Activated T-helper 1 cell treated with anti-CD3 and anti-CD28 coated beads, Interleukin-12 subunit alpha, Interleukin-12 subunit beta, Interleukin-2, Interleukin-4 antibody, amounts not matched to agents 30 ng/mL and 10 ng/mL and 1 ng/mL, durations not matched to agents 14 hours and 24 hours and 36 hours (primary cell): ENCODE measurements at regions of chr7 and their contacts with region 1.

Region 1: DNA sequence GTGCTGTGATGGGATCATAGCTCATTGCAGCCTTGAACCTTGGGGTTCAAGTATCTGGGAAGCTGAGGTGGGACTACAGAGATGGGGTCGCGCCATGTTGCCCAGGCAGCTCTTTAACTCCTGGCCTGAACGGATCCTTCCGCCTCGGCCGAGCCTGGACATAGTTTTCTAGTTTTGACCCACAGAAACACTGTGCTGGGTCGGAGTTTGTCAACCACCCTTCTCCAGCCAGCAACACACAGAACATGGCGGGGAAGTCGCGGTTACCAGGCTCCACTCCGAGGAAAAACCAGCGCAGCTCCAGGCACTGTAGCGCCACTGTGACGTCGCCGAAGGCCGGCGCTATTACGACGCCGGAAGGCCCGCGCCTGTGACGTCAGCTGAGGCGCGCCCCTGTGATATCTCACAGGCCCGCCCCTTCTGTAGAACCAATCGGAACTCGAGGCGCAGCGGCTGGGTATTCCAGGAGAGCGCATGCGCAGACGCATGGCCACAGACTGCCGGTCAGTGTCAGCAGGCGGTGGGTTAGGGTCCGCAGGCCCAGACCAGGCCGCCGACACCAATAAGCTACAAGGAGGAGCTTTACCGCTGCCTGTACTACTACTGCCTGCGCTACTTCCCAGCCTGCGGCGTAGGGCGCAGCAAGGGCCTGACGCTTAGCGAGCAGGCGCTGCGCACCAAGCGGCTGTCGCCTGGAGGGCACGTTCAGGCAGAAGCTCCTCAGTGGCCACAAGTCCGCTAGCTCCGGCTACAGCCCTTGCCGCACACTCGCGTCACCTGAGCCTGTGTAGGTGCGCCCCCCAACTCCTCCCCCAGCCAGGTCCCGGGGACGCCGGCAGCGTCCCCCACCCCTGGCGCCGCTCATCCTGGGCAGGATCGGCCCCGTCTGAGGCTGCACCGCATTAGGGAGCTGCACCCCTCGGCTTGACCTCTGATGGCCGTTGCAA is 135.2 kb upstream of the KCTD7 start:
- DNase-seq: peak; percentile 96
- H3K4me3 Mint-ChIP-seq: peak overlapping the region; percentile 89
- H3K27ac Mint-ChIP-seq: peak overlapping the region; percentile 89
- H3K4me1 Mint-ChIP-seq: peaks cover 10% of the 10 kb centered on the region
- H3K27me3 Mint-ChIP-seq: no peaks in the 10 kb centered on the region

Region 2: GRCh38 chr7:65750511-65751344 is 742.8 kb before region 1 on chr7:
- intact Hi-C with region 1: loop called (anchors 10 kb)
- DNase-seq: peak; percentile 89
- H3K4me3 Mint-ChIP-seq: peak overlapping the region; percentile 100
- H3K27ac Mint-ChIP-seq: peak overlapping the region; percentile 97
- H3K4me1 Mint-ChIP-seq: peaks cover 11% of the 10 kb centered on the region
- H3K27me3 Mint-ChIP-seq: no peaks in the 10 kb centered on the region

Region 3: GRCh38 chr7:66075590-66076461 is 417.7 kb before region 1 on chr7 and contains the start of gene ASL:
- intact Hi-C with region 1: loop called (anchors 1 kb)
- DNase-seq: peak; percentile 93
- H3K4me3 Mint-ChIP-seq: peak within 1 kb of the TSS; percentile 95
- H3K27ac Mint-ChIP-seq: peak within 1 kb of the TSS; percentile 72
- H3K4me1 Mint-ChIP-seq: peaks cover 19% of the 10 kb centered on the region
- H3K27me3 Mint-ChIP-seq: peaks cover 3% of the 10 kb centered on the region
- total RNA-seq, gene ASL: 36.6 and 44.9 TPM in 2 replicates

Region 4: GRCh38 chr7:66321292-66321691 is 172.2 kb before region 1 on chr7:
- intact Hi-C with region 1: no loop called
- DNase-seq: no peak
- H3K4me3 Mint-ChIP-seq: no peak overlapping the region
- H3K27ac Mint-ChIP-seq: no peak overlapping the region
- H3K4me1 Mint-ChIP-seq: no peaks in the 10 kb centered on the region
- H3K27me3 Mint-ChIP-seq: peaks cover 2% of the 10 kb centered on the region

Region 5: GRCh38 chr7:66454600-66455225 is 38.8 kb before region 1 on chr7:
- intact Hi-C with region 1: loop called (anchors 1 kb)
- DNase-seq: no peak
- H3K4me3 Mint-ChIP-seq: no peak overlapping the region
- H3K27ac Mint-ChIP-seq: peak overlapping the region; percentile 74
- H3K4me1 Mint-ChIP-seq: peaks cover 25% of the 10 kb centered on the region
- H3K27me3 Mint-ChIP-seq: no peaks in the 10 kb centered on the region

Region 6: GRCh38 chr7:66529883-66530610 is 36.5 kb after region 1 on chr7:
- intact Hi-C with region 1: no loop called
- DNase-seq: no peak
- H3K4me3 Mint-ChIP-seq: no peak overlapping the region
- H3K27ac Mint-ChIP-seq: no peak overlapping the region
- H3K4me1 Mint-ChIP-seq: no peaks in the 10 kb centered on the region
- H3K27me3 Mint-ChIP-seq: no peaks in the 10 kb centered on the region

Region 7: DNA sequence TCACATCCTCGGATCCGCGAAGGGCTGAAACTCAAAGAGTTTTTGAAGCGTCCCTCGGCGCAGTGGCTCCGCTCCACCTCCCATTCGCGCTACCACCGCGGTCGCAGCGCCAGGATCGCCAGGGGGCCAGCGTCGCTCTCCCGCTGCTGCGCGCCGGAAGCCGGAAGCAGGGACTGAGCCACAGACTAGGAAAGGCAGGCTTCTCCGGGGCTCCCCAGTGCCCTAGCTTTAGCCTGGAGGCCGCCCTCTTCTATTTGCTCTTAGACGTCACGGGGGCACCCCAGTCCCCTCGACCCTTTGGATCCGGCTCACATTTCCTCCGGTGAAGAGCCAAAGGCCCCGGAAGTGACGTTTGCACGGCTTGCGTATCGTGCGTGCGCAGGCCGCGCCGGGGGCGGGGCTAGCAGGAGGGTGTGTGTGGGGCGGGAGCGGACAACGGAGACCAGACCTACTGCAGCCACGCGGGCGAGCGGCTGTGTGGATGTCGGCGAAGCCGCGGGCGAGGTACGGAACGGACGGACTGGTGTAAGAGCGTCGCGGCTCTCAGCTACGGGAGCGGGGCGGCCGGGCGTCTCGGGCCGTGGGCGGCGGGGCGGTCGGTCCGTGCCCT is 160.7 kb after region 1 on chr7:
- intact Hi-C with region 1: loop called (anchors 1 kb)
- DNase-seq: peak; percentile 98
- H3K4me3 Mint-ChIP-seq: peak overlapping the region; percentile 94
- H3K27ac Mint-ChIP-seq: peak overlapping the region; percentile 94
- H3K4me1 Mint-ChIP-seq: peaks cover 15% of the 10 kb centered on the region
- H3K27me3 Mint-ChIP-seq: no peaks in the 10 kb centered on the region

Region 8: DNA sequence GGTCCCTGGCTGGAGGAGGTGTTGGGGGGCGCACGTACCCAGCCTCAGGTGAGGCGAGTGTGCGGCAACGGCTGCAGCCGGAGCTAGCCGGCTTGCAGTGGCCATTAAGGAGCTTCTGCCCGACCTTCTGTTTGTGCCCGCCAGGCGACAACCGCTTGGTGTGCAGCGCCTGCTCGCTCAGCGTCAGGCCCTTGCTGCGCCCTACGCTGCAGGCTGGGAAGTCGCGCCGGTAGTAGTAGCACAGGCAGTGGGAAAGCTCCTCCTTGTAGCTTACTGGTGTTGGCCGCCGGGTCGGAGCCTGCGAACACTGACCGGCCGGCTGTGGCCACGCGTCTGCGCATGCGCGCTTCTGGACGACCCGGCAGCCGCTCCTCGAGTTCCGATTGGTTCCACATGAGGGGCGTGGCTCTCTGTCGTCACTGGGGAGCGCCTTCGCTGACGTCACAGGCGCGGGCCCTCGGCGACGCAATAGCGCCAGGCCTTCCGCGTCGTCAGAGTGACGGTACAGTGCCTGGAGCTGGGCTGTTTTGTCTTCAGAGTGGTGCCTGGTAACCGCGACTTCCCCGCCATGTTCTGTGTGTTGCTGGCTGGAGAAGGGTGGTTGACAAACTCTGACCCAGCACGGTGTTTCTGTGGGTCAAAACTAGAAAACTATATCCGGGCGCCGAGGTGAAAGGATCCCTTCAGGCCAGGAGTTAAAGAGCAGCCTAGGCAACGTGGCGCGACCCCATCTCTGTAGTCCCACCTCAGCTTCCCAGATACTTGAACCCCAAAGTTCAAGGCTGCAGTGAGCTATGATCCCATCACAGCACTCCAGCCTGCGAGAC is 351.3 kb after region 1 on chr7:
- intact Hi-C with region 1: loop called (anchors 1 kb)
- DNase-seq: peak; percentile 99
- H3K4me3 Mint-ChIP-seq: peak overlapping the region; percentile 90
- H3K27ac Mint-ChIP-seq: peak overlapping the region; percentile 98
- H3K4me1 Mint-ChIP-seq: peaks cover 19% of the 10 kb centered on the region
- H3K27me3 Mint-ChIP-seq: peaks cover 8% of the 10 kb centered on the region